K562 (cell line): ENCODE measurements at regions of chr1 and their contacts with region 1.

Region 1: DNA sequence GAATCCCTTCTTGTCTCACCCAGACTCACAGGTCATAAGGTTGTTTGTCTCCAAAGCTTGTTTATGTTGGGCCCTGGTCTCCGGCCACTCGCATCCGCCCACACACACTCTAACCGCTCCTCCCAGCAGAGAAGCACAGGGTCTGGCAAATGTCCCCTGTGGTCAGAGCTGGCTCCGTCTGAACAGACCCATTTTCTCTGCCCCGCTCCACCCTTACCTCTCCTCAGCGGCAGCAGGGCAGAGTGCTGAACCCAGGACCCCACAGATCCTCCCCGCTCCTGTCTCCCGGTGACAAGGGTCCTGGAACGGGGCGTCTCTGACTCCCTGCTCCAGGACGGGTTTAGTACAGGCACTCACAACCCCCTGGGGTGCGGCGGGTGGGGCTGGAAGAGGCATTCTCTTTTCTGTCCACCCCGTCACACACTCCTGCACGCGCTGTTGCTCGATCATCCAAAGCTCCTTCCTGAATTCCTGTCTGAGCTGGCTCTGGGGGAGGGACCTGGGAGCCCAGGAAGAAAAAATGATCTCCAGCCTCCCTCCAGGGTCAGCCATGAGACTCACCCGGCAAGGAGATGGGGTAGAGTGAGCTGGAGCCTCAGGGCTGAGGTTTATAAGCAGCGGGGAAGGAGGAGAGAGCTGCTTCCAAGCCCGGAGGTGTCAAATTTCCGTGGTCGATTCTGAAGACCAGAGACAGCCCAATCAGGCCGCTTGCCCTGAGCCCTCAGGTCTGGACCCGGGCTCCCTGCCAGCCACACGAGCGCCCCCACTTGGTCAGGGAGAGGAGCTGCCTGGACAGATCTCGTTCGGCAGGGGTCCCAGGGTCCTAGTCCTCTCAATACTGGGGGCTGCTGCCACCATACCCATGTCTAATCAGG is at the start of gene S100A13:
- DNase-seq: peak; percentile 80 to 96 (median 88)
- ATAC-seq: peak; percentile 93
- H3K4me3 ChIP-seq: peak within 1 kb of the TSS; percentile 49
- H3K27ac ChIP-seq: peak within 1 kb of the TSS; percentile 82
- H3K4me1 ChIP-seq: peaks cover 26 to 44% of the 10 kb centered on the region in 2 experiments
- H3K27me3 ChIP-seq: no peaks in the 10 kb centered on the region
- CTCF ChIP-seq: peak; percentile 85 to 95 (median 89)
- EP300 ChIP-seq: peak; percentile 31; the same call in 1 of the 2 replicates
- POLR2A ChIP-seq: peak; percentile 92
- RAD21 ChIP-seq: peak; percentile 33 to 67; a peak in 3 of 4 replicates
- polyA plus RNA-seq, gene S100A13: 128 to 129 TPM

Region 2: GRCh38 chr1:153540395-153541361 is 86.5 kb before region 1 on chr1 and contains the start of gene S100A5:
- CTCF ChIA-PET with region 1: no interaction called
- POLR2A ChIA-PET with region 1: interaction called, 13 read pairs
- in situ Hi-C with region 1: no loop called
- intact Hi-C with region 1: no loop called
- DNase-seq: peak in 1 of 4 experiments; percentile 58
- ATAC-seq: no peak
- H3K4me3 ChIP-seq: no peak within 1 kb of the TSS
- H3K27ac ChIP-seq: no peak within 1 kb of the TSS; the same call in 2 of the 3 replicates
- H3K4me1 ChIP-seq: peaks cover 77 to 79% of the 10 kb centered on the region in 2 experiments
- H3K27me3 ChIP-seq: no peaks in the 10 kb centered on the region
- CTCF ChIP-seq: no peak
- EP300 ChIP-seq: no peak
- POLR2A ChIP-seq: no peak
- RAD21 ChIP-seq: no peak
- polyA plus RNA-seq, gene S100A5: 0.67 to 1.4 TPM

Region 3: GRCh38 chr1:153602749-153603148 is 24.4 kb before region 1 on chr1:
- CTCF ChIA-PET with region 1: no interaction called
- POLR2A ChIA-PET with region 1: interaction called, 23 read pairs
- in situ Hi-C with region 1: no loop called
- intact Hi-C with region 1: no loop called
- DNase-seq: no peak
- ATAC-seq: no peak
- H3K4me3 ChIP-seq: no peak overlapping the region
- H3K27ac ChIP-seq: no peak overlapping the region
- H3K4me1 ChIP-seq: peaks cover 0 to 5% of the 10 kb centered on the region in 2 experiments; a peak in 3 of 5 replicates
- H3K27me3 ChIP-seq: no peaks in the 10 kb centered on the region
- CTCF ChIP-seq: no peak
- EP300 ChIP-seq: no peak
- POLR2A ChIP-seq: no peak
- RAD21 ChIP-seq: no peak

Region 4: GRCh38 chr1:153639280-153639679 is 12.1 kb after region 1 on chr1:
- CTCF ChIA-PET with region 1: no interaction called
- POLR2A ChIA-PET with region 1: interaction called, 23 read pairs
- in situ Hi-C with region 1: no loop called
- intact Hi-C with region 1: no loop called
- DNase-seq: no peak
- ATAC-seq: no peak
- H3K4me3 ChIP-seq: no peak overlapping the region
- H3K27ac ChIP-seq: no peak overlapping the region
- H3K4me1 ChIP-seq: peaks cover 3 to 8% of the 10 kb centered on the region in 2 experiments; a peak in 4 of 5 replicates
- H3K27me3 ChIP-seq: no peaks in the 10 kb centered on the region
- CTCF ChIP-seq: no peak
- EP300 ChIP-seq: no peak
- POLR2A ChIP-seq: 0 out of 2 replicates have a peak, but pooled peaks have one; percentile 0
- RAD21 ChIP-seq: no peak

Region 5: GRCh38 chr1:153658400-153659174 is 31.4 kb after region 1 on chr1 and contains the start of gene SNAPIN:
- CTCF ChIA-PET with region 1: no interaction called
- POLR2A ChIA-PET with region 1: interaction called, 10 read pairs
- in situ Hi-C with region 1: no loop called
- intact Hi-C with region 1: no loop called
- DNase-seq: peak; percentile 87 to 95 (median 90)
- ATAC-seq: peak; percentile 97
- H3K4me3 ChIP-seq: peak within 1 kb of the TSS; percentile 98
- H3K27ac ChIP-seq: peak within 1 kb of the TSS; percentile 86
- H3K4me1 ChIP-seq: peaks cover 3 to 16% of the 10 kb centered on the region in 2 experiments; a peak in 4 of 5 replicates
- H3K27me3 ChIP-seq: no peaks in the 10 kb centered on the region
- CTCF ChIP-seq: 0 out of 6 replicates have a peak, but pooled peaks of 2 of the 3 experiments have one; percentile 14 to 25
- EP300 ChIP-seq: no peak
- POLR2A ChIP-seq: peak; percentile 87
- RAD21 ChIP-seq: 0 out of 4 replicates have a peak, but pooled peaks of 1 of the 2 experiments have one; percentile 6
- polyA plus RNA-seq, gene SNAPIN: 11.2 to 15.8 TPM